HCT116 (cell line): ENCODE measurements at regions of chr3 and their contacts with region 1.

Region 1: GRCh38 chr3:196502775-196503195 is 783 bp downstream of the RNF168 start:
- DNase-seq: no peak
- ATAC-seq: peak; percentile 23; the same call in 1 of the 2 replicates
- H3K4me3 ChIP-seq: peak overlapping the region; percentile 80 to 83
- H3K27ac ChIP-seq: peak overlapping the region; percentile 91
- H3K4me1 ChIP-seq: peaks cover 4 to 18% of the 10 kb centered on the region in 2 experiments; a peak in 3 of 4 replicates
- H3K27me3 ChIP-seq: no peaks in the 10 kb centered on the region
- CTCF ChIP-seq: 0 out of 6 replicates have a peak, but pooled peaks of 1 of the 3 experiments have one; percentile 11
- POLR2A ChIP-seq: no peak
- RAD21 ChIP-seq: no peak

Region 2: DNA sequence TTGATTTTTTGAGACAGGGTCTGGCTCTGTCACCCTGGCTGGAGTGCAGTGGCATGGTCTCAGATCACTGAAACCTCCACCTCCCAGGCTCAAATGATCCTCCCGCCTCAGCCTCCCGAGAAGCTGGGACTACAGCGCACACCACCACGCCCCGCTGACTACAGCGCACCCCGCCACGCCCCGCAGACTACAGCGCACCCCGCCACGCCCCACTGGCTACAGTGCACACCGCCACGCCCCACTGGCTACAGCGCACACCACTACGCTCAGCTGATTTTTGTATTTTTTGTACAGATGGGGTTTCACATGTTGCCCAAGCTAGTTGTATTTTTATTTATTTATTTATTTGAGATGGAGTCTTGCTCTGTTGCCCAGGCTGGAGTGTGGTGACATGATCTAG is 250.9 kb before region 1 on chr3:
- CTCF ChIA-PET with region 1: no interaction called
- POLR2A ChIA-PET with region 1: no interaction called
- RAD21 ChIA-PET with region 1: no interaction called
- intact Hi-C with region 1: loop called (anchors 1 kb)
- DNase-seq: no peak
- ATAC-seq: no peak
- H3K4me3 ChIP-seq: no peak overlapping the region
- H3K27ac ChIP-seq: no peak overlapping the region
- H3K4me1 ChIP-seq: no peaks in the 10 kb centered on the region
- H3K27me3 ChIP-seq: no peaks in the 10 kb centered on the region
- CTCF ChIP-seq: no peak
- POLR2A ChIP-seq: no peak
- RAD21 ChIP-seq: no peak

Region 3: GRCh38 chr3:196317687-196318467 is 184.9 kb before region 1 on chr3 and contains the start of gene DYNLT2B:
- CTCF ChIA-PET with region 1: no interaction called
- POLR2A ChIA-PET with region 1: interaction called, 6 read pairs
- RAD21 ChIA-PET with region 1: no interaction called
- intact Hi-C with region 1: loop called (anchors 10 kb)
- DNase-seq: peak; percentile 74
- ATAC-seq: peak; percentile 88
- H3K4me3 ChIP-seq: peak within 1 kb of the TSS; percentile 86 to 89
- H3K27ac ChIP-seq: peak within 1 kb of the TSS; percentile 75
- H3K4me1 ChIP-seq: peaks cover 5 to 40% of the 10 kb centered on the region in 2 experiments; a peak in 3 of 4 replicates
- H3K27me3 ChIP-seq: no peaks in the 10 kb centered on the region
- CTCF ChIP-seq: no peak
- POLR2A ChIP-seq: peak; percentile 67
- RAD21 ChIP-seq: 0 out of 2 replicates have a peak, but pooled peaks have one; percentile 17
- total RNA-seq, gene DYNLT2B: 9.7 TPM

Region 4: DNA sequence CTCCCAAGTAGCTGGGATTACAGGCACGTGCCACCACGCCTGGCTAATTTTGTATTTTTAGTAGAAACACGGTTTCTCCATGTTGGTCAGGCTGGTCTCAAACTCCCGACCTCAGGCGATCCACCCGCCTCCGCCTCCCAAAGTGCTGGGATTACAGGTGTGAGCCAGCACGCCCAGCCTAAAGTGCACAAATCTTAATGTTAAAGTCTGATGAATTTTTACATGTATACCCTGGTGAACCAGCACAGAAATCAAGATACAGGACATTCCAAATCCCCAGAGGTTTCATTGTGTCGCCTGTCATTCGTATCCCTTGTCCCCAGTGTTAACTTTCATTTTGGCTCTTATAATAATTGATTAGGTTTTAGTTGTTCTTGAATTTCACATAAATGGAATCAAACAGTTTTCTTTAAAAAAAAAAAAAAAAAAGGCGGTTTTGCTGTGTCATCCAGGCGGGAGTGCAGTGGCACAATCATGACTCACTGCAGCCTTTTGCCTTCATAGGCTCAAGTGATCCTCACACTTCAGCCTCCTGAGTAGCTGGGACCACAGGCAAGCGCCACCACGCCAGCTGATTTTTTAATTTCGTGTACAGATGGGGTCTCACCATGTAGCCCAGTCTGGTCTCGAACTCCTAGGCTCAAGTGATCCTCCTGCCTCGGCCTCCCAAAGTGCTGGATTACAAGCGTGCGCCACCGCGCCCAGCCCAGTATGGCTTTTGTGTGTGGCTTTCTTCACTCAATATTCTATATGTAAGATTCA is 163.1 kb before region 1 on chr3:
- CTCF ChIA-PET with region 1: no interaction called
- POLR2A ChIA-PET with region 1: no interaction called
- RAD21 ChIA-PET with region 1: no interaction called
- intact Hi-C with region 1: loop called (anchors 5 kb)
- DNase-seq: no peak
- ATAC-seq: no peak
- H3K4me3 ChIP-seq: peak overlapping the region in 1 of 2 experiments; percentile 21; a peak in 2 of 4 replicates
- H3K27ac ChIP-seq: peak overlapping the region; percentile 41
- H3K4me1 ChIP-seq: peaks cover 43 to 67% of the 10 kb centered on the region in 2 experiments
- H3K27me3 ChIP-seq: no peaks in the 10 kb centered on the region
- CTCF ChIP-seq: no peak
- POLR2A ChIP-seq: no peak
- RAD21 ChIP-seq: no peak

Region 5: DNA sequence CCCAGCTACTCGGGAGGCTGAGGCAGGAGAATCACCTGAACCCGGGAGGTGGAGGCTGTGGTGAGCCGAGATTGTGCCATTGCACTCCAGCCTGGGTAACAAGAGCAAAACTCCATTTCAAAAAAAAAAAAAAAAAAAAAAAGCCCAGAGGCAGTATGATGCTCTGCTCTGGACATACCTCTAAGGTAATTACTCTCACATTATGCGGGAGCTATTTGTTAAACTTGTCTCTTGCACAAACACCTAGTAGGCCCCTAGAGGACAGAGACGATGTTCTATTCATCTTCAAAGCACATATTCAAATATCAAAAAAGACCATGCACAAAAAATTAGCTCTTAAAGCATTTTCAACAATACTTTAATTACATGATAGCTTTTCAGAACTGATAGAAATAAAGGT is 655.7 kb after region 1 on chr3:
- CTCF ChIA-PET with region 1: no interaction called
- POLR2A ChIA-PET with region 1: no interaction called
- RAD21 ChIA-PET with region 1: no interaction called
- intact Hi-C with region 1: no loop called
- DNase-seq: no peak
- ATAC-seq: no peak
- H3K4me3 ChIP-seq: no peak overlapping the region
- H3K27ac ChIP-seq: no peak overlapping the region
- H3K4me1 ChIP-seq: no peaks in the 10 kb centered on the region
- H3K27me3 ChIP-seq: no peaks in the 10 kb centered on the region
- CTCF ChIP-seq: no peak
- POLR2A ChIP-seq: no peak
- RAD21 ChIP-seq: no peak